Ovary (tissue), 10 donors: ENCODE measurements at regions of chr15 and their contacts with region 1.

Region 1: DNA sequence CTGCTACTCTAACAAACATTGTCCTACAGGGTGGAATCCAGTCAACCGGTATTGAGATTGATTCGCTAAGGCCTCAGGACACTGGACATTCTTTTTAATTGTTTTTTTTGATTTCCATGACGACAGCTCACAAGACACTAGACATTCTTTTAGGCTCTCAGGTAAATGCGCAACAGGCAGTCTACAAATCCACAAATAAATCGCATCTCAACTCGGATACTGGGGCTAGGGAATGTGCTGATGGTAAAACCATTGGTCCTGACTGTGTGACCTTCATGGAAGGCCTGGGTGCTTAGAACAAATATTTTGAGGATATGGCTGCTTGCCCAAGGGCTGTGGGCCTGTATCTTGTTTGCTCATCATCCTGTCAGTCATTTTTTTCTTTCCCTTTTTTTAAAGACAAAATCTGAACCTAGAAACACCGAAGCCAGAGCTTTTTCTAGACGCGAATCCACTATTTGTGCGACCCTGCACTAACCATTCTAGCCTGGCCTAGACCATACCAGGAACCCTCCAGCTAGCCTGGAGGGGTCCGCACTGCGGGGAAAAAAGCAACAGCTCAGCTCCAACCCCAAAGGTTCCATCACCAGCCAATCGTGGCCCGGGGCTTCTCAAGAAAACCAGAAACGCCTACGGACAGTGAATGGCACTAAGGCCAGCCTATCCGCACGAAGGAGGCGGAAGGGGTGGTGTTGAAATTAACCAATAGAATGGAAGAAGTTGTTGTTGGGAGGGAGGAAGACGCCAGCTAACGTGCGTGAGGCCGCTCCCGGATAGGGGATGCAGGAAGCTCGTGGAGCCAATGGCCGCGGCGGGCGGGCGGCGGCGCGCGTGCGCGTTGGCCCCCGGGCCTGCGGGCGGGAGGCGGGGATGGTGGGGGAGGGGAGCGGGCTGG is 18.1 kb upstream of the CHD2 start:
- DNase-seq: peak; percentile 98 to 100 (median 99)
- H3K4me3 ChIP-seq: peak overlapping the region; percentile 44
- H3K27ac ChIP-seq: peak overlapping the region; percentile 99 to 100
- H3K4me1 ChIP-seq: peaks cover 14% of the 10 kb centered on the region
- H3K27me3 ChIP-seq: no peaks in the 10 kb centered on the region
- CTCF ChIP-seq: peak in 1 of 3 donors; percentile 28
- EP300 ChIP-seq: no peak
- POLR2A ChIP-seq: peak; percentile 97

Region 2: GRCh38 chr15:92903941-92904831 is 22.1 kb after region 1 on chr15:
- intact Hi-C with region 1: loop called in 2 of 4 experiments (anchors 2 kb)
- DNase-seq: peak; percentile 99 to 100 (median 99)
- H3K4me3 ChIP-seq: peak overlapping the region; percentile 71
- H3K27ac ChIP-seq: peak overlapping the region; percentile 69 to 83
- H3K4me1 ChIP-seq: peaks cover 9% of the 10 kb centered on the region
- H3K27me3 ChIP-seq: no peaks in the 10 kb centered on the region
- CTCF ChIP-seq: peak in 1 of 3 donors; percentile 6
- EP300 ChIP-seq: peak; percentile 97
- POLR2A ChIP-seq: peak; percentile 84